HEK293 (cell line): ENCODE measurements at regions of chrX and their contacts with region 1.

Region 1: GRCh38 chrX:134520860-134521390 is 61.0 kb downstream of the HPRT1 start:
- H3K4me3 ChIP-seq: no peak overlapping the region
- H3K27ac ChIP-seq: no peak overlapping the region
- H3K4me1 ChIP-seq: no peaks in the 10 kb centered on the region
- CTCF ChIP-seq: peak; percentile 58; the same call in 1 of the 2 replicates

Region 2: DNA sequence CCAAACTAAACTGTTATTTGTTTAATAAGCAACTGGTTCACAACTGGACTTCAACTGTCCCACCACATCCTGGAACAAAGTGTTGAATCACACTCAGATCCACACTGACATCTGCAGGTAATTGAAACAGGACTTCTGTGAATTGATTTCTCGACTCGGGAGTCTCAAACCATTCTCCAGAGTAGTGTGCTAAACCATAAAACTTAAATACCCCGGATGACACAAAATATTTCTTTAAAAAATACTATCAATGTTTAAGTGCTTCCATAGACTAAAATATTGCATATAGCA is 232.7 kb after region 1 on chrX:
- CTCF ChIA-PET with region 1: interaction called, 19 read pairs
- POLR2A ChIA-PET with region 1: no interaction called
- H3K4me3 ChIP-seq: no peak overlapping the region
- H3K27ac ChIP-seq: no peak overlapping the region
- H3K4me1 ChIP-seq: 0 out of 2 replicates have a peak, but pooled peaks cover 3% of the 10 kb centered on the region
- CTCF ChIP-seq: peak; percentile 43; the same call in 1 of the 2 replicates